Activated B cell treated with CpG ODN at 0.5 μM for 24 hours (primary cell): ENCODE measurements at regions of chr6 and their contacts with region 1.

Region 1: GRCh38 chr6:119224095-119224701 is 125.4 kb downstream of the MAN1A1 start:
- DNase-seq: no peak
- ATAC-seq: no peak
- H3K4me3 Mint-ChIP-seq: no peak overlapping the region
- H3K27ac Mint-ChIP-seq: no peak overlapping the region
- H3K4me1 Mint-ChIP-seq: peaks cover 4% of the 10 kb centered on the region
- H3K27me3 Mint-ChIP-seq: no peaks in the 10 kb centered on the region
- CTCF ChIP-seq: no peak

Region 2: GRCh38 chr6:120083186-120083585 is 859.0 kb after region 1 on chr6:
- CTCF ChIA-PET with region 1: no interaction called
- POLR2A ChIA-PET with region 1: no interaction called
- intact Hi-C with region 1: loop called (anchors 5 kb)
- DNase-seq: no peak
- ATAC-seq: no peak
- H3K4me3 Mint-ChIP-seq: no peak overlapping the region
- H3K27ac Mint-ChIP-seq: no peak overlapping the region
- H3K4me1 Mint-ChIP-seq: peaks cover 10% of the 10 kb centered on the region
- H3K27me3 Mint-ChIP-seq: no peaks in the 10 kb centered on the region
- CTCF ChIP-seq: no peak